Activated CD8-positive, alpha-beta T cell treated with anti-CD3 and anti-CD28 coated beads for 36 hours (primary cell): ENCODE measurements at regions of chr7 and their contacts with region 1.

Region 1: GRCh38 chr7:155533827-155534690 is 12.3 kb downstream of the CNPY1 start:
- DNase-seq: peak; percentile 67
- ATAC-seq: peak; percentile 85
- H3K4me3 Mint-ChIP-seq: peak overlapping the region; percentile 53
- H3K27ac Mint-ChIP-seq: no peak overlapping the region
- H3K4me1 Mint-ChIP-seq: peaks cover 9% of the 10 kb centered on the region
- H3K27me3 Mint-ChIP-seq: peaks cover 53% of the 10 kb centered on the region
- CTCF ChIP-seq: peak; percentile 76

Region 2: DNA sequence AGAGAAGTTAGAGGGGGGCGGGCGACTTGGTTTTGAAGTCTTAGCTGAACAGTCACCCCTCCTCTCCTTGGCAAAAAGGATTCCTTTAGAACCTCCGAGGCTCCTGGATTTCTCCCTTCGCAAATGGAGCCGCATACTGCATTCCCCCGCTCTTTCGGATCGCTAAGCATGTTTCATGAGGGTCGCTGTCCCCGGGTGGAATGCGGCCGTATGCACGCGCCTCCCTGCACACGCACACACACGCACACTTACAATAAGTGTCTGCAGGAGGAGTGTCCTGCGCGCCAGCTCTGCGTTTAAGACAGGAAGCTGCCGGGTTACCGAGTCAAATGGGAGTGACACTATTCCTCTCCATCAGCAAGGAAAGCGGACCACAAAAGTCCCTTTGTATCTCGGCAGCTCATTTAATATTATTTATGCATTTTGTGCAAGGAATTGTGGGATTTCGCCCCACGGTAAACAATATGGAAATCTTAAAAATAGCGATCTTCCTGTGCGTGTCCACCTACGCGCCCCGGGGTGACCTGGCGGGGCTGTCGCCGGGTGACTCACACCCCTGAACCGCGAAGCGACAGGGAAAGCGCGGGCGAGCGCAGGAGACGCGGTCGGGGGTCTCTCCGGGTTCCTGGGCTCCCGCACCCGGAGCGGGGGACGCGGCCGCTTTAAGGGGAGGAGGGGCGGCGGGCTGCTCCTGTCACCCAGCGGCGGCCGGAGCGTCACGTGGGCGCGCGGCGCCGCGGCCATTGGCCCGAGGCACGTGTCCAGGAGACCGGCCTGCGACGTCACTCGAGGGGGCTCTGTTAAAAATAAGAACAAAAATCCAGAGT is 77.1 kb before region 1 on chr7:
- CTCF ChIA-PET with region 1: interaction called, 3 read pairs
- POLR2A ChIA-PET with region 1: no interaction called
- intact Hi-C with region 1: loop called (anchors 5 kb)
- DNase-seq: peak; percentile 63
- ATAC-seq: peak; percentile 34
- H3K4me3 Mint-ChIP-seq: peak overlapping the region; percentile 44
- H3K27ac Mint-ChIP-seq: no peak overlapping the region
- H3K4me1 Mint-ChIP-seq: peaks cover 5% of the 10 kb centered on the region
- H3K27me3 Mint-ChIP-seq: peaks cover 74% of the 10 kb centered on the region
- CTCF ChIP-seq: no peak

Region 3: GRCh38 chr7:155517452-155517851 is 16.6 kb before region 1 on chr7:
- CTCF ChIA-PET with region 1: no interaction called
- POLR2A ChIA-PET with region 1: no interaction called
- intact Hi-C with region 1: no loop called
- DNase-seq: no peak
- ATAC-seq: no peak
- H3K4me3 Mint-ChIP-seq: no peak overlapping the region
- H3K27ac Mint-ChIP-seq: no peak overlapping the region
- H3K4me1 Mint-ChIP-seq: no peaks in the 10 kb centered on the region
- H3K27me3 Mint-ChIP-seq: peaks cover 29% of the 10 kb centered on the region
- CTCF ChIP-seq: no peak